ENCODE measurements at regions of chr2 and their contacts with region 1.

Region 1: GRCh38 chr2:209473930-209474419 is 50.1 kb downstream of the MAP2 start:
- DNase-seq: no peak
- H3K4me3 ChIP-seq: no peak overlapping the region
- H3K27ac ChIP-seq: no peak overlapping the region
- H3K4me1 ChIP-seq: peaks cover 4 to 20% of the 10 kb centered on the region in 2 donors
- H3K27me3 ChIP-seq: no peaks in the 10 kb centered on the region
- CTCF ChIP-seq: no peak

Region 2: GRCh38 chr2:209495855-209496585 is 22.0 kb after region 1 on chr2:
- intact Hi-C with region 1: loop called (anchors 1 kb)
- DNase-seq: peak; percentile 17 to 80
- H3K4me3 ChIP-seq: peak overlapping the region; percentile 6 to 33
- H3K27ac ChIP-seq: peak overlapping the region; percentile 85 to 89
- H3K4me1 ChIP-seq: peaks cover 0 to 6% of the 10 kb centered on the region in 2 donors
- H3K27me3 ChIP-seq: no peaks in the 10 kb centered on the region
- CTCF ChIP-seq: no peak

Measured in ascending aorta (tissue), 2 donors.